ENCODE measurements at regions of chr3 and their contacts with region 1.

Region 1: DNA sequence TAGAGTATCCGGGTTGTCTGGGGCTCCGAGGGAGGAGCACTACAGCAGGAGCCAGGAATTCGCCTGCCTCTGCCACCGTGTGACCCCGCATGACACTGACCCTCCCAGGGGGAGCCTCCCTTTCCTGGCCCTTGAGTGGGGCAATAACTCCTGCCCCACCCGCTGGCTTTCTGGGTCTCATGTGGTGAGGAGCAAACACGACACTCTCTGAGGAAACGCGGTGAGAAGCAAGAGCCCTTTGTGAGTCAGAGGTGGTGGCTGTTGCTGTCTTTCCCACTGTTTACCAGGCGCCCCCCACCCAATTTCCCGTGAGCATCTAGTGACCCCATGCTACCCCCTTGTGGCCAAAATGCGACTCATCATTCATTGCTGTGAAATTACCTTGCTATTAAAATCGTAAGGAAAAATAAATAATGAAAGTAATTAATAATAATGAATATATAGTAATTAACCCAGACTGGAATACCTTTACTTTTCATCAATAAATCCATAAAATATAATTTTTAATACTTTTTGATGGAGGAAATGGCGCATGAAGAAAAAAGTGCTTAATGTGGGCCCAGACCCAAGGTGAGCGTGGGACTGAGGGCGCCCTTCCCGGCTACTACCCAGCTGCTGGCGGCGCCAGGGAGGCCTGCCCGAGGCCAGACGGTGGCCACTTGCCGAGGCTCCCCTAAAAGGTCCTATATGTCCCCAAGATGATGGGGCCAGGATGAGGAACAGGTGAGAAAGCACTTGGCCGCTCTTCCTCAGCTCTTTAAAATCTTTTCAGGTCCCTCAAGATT is 29.3 kb downstream of the CCNL1 start:
- DNase-seq: peak; percentile 43 to 86 (median 80)
- ATAC-seq: peak; percentile 78
- H3K4me3 ChIP-seq: peak overlapping the region; percentile 35
- H3K4me3 Mint-ChIP-seq: peak overlapping the region; percentile 61 to 84 (median 74)
- H3K27ac ChIP-seq: peak overlapping the region; percentile 80
- H3K27ac Mint-ChIP-seq: peak overlapping the region; percentile 93 to 99 (median 97)
- H3K4me1 ChIP-seq: peaks cover 44 to 69% of the 10 kb centered on the region in 2 donors
- H3K4me1 Mint-ChIP-seq: peaks cover 34 to 89% (median 60%) of the 10 kb centered on the region in 7 donors
- H3K27me3 ChIP-seq: no peaks in the 10 kb centered on the region
- H3K27me3 Mint-ChIP-seq: no peaks in the 10 kb centered on the region

Region 2: GRCh38 chr3:156519758-156520162 is 610.9 kb before region 1 on chr3:
- CTCF ChIA-PET with region 1: no interaction called
- POLR2A ChIA-PET with region 1: no interaction called
- intact Hi-C with region 1: loop called (anchors 1 to 2 kb)
- DNase-seq: no peak
- ATAC-seq: no peak
- H3K4me3 ChIP-seq: no peak overlapping the region
- H3K4me3 Mint-ChIP-seq: no peak overlapping the region
- H3K27ac ChIP-seq: no peak overlapping the region
- H3K27ac Mint-ChIP-seq: no peak overlapping the region
- H3K4me1 ChIP-seq: peaks cover 2 to 6% of the 10 kb centered on the region in 2 donors
- H3K4me1 Mint-ChIP-seq: peaks cover 6 to 26% (median 9%) of the 10 kb centered on the region in 7 donors
- H3K27me3 ChIP-seq: no peaks in the 10 kb centered on the region
- H3K27me3 Mint-ChIP-seq: peaks cover 13 to 84% (median 33%) of the 10 kb centered on the region in 5 donors

Region 3: GRCh38 chr3:156816800-156817645 is 313.6 kb before region 1 on chr3:
- CTCF ChIA-PET with region 1: no interaction called
- POLR2A ChIA-PET with region 1: interaction called, 3 read pairs
- intact Hi-C with region 1: loop called (anchors 1 to 2 kb)
- DNase-seq: peak; percentile 68 to 90 (median 81)
- ATAC-seq: peak; percentile 89
- H3K4me3 ChIP-seq: peak overlapping the region; percentile 64
- H3K4me3 Mint-ChIP-seq: peak overlapping the region; percentile 87 to 97 (median 95)
- H3K27ac ChIP-seq: peak overlapping the region; percentile 67
- H3K27ac Mint-ChIP-seq: peak overlapping the region; percentile 90 to 99 (median 96)
- H3K4me1 ChIP-seq: peaks cover 8 to 10% of the 10 kb centered on the region in 2 donors
- H3K4me1 Mint-ChIP-seq: peaks cover 6 to 72% (median 29%) of the 10 kb centered on the region in 7 donors
- H3K27me3 ChIP-seq: no peaks in the 10 kb centered on the region
- H3K27me3 Mint-ChIP-seq: no peaks in the 10 kb centered on the region

Region 4: GRCh38 chr3:156978481-156978961 is 152.1 kb before region 1 on chr3:
- CTCF ChIA-PET with region 1: no interaction called
- POLR2A ChIA-PET with region 1: no interaction called
- intact Hi-C with region 1: loop called in 1 of 2 experiments (anchors 5 kb)
- DNase-seq: no peak
- ATAC-seq: peak; percentile 31
- H3K4me3 ChIP-seq: no peak overlapping the region
- H3K4me3 Mint-ChIP-seq: peak overlapping the region in 1 of 10 donors; percentile 20
- H3K27ac ChIP-seq: no peak overlapping the region
- H3K27ac Mint-ChIP-seq: no peak overlapping the region
- H3K4me1 ChIP-seq: no peaks in the 10 kb centered on the region
- H3K4me1 Mint-ChIP-seq: peaks cover 0 to 9% (median 7%) of the 10 kb centered on the region in 7 donors
- H3K27me3 ChIP-seq: no peaks in the 10 kb centered on the region
- H3K27me3 Mint-ChIP-seq: peaks cover 0 to 28% (median 0%) of the 10 kb centered on the region in 5 donors

Region 5: GRCh38 chr3:157103280-157103679 is 27.4 kb before region 1 on chr3:
- CTCF ChIA-PET with region 1: interaction called, 6 read pairs
- POLR2A ChIA-PET with region 1: interaction called, 4 read pairs
- intact Hi-C with region 1: loop called in 1 of 2 experiments (anchors 1 kb)
- DNase-seq: no peak
- ATAC-seq: no peak
- H3K4me3 ChIP-seq: no peak overlapping the region
- H3K4me3 Mint-ChIP-seq: peak overlapping the region in 1 of 10 donors; percentile 42
- H3K27ac ChIP-seq: no peak overlapping the region
- H3K27ac Mint-ChIP-seq: peak overlapping the region in 3 of 9 donors; percentile 42 to 86 (median 75)
- H3K4me1 ChIP-seq: peaks cover 0 to 11% of the 10 kb centered on the region in 2 donors
- H3K4me1 Mint-ChIP-seq: peaks cover 0 to 60% (median 7%) of the 10 kb centered on the region in 7 donors
- H3K27me3 ChIP-seq: no peaks in the 10 kb centered on the region
- H3K27me3 Mint-ChIP-seq: no peaks in the 10 kb centered on the region

Region 6: GRCh38 chr3:157159762-157160657 is 29.4 kb after region 1 on chr3 and contains the start of gene CCNL1:
- CTCF ChIA-PET with region 1: no interaction called
- POLR2A ChIA-PET with region 1: interaction called, 26 read pairs
- intact Hi-C with region 1: loop called in 1 of 2 experiments (anchors 1 kb)
- DNase-seq: peak; percentile 94 to 98 (median 97)
- ATAC-seq: peak; percentile 88
- H3K4me3 ChIP-seq: peak within 1 kb of the TSS; percentile 92
- H3K4me3 Mint-ChIP-seq: peak within 1 kb of the TSS; percentile 91 to 100 (median 96)
- H3K27ac ChIP-seq: peak within 1 kb of the TSS; percentile 97
- H3K27ac Mint-ChIP-seq: peak within 1 kb of the TSS; percentile 96 to 100 (median 98)
- H3K4me1 ChIP-seq: peaks cover 39 to 45% of the 10 kb centered on the region in 2 donors
- H3K4me1 Mint-ChIP-seq: peaks cover 37 to 69% (median 65%) of the 10 kb centered on the region in 7 donors
- H3K27me3 ChIP-seq: no peaks in the 10 kb centered on the region
- H3K27me3 Mint-ChIP-seq: no peaks in the 10 kb centered on the region
- total RNA-seq, gene CCNL1: 230 to 1,170 (median 374) TPM

Measured in naive thymus-derived CD4-positive, alpha-beta T cell (primary cell).